Breast epithelium (tissue), 4 donors: ENCODE measurements at regions of chr4 and their contacts with region 1.

Region 1: GRCh38 chr4:151808120-151808529 is 47.3 kb upstream of the GATB start:
- DNase-seq: no peak
- H3K4me3 ChIP-seq: no peak overlapping the region
- H3K27ac ChIP-seq: no peak overlapping the region
- H3K4me1 ChIP-seq: no peaks in the 10 kb centered on the region
- H3K27me3 ChIP-seq: no peaks in the 10 kb centered on the region
- CTCF ChIP-seq: no peak
- POLR2A ChIP-seq: no peak

Region 2: GRCh38 chr4:150619042-150619441 is 1189.1 kb before region 1 on chr4:
- intact Hi-C with region 1: no loop called
- DNase-seq: no peak
- H3K4me3 ChIP-seq: no peak overlapping the region
- H3K27ac ChIP-seq: no peak overlapping the region
- H3K4me1 ChIP-seq: no peaks in the 10 kb centered on the region
- H3K27me3 ChIP-seq: no peaks in the 10 kb centered on the region
- CTCF ChIP-seq: no peak
- POLR2A ChIP-seq: no peak

Region 3: DNA sequence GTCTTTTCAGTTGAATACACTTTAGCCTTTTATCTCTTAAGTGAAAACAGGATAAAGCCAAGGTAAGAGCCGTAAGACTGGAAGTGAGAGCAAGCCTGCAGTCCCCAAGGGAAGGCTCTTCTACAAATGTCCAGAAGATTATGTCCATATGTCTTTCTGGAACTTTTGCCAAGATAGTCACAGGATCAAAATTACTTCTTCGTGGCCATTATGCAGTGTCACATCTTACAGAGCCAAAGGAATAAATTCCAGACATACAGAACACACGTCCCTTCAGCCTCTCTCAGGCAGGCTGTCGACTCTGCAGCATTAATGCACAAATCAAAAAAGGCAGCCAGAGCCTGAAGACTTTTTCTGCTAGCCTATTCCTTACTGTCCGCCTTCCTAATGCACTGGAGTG is 36.5 kb before region 1 on chr4:
- intact Hi-C with region 1: no loop called
- DNase-seq: no peak
- H3K4me3 ChIP-seq: no peak overlapping the region
- H3K27ac ChIP-seq: no peak overlapping the region
- H3K4me1 ChIP-seq: no peaks in the 10 kb centered on the region
- H3K27me3 ChIP-seq: no peaks in the 10 kb centered on the region
- CTCF ChIP-seq: no peak
- POLR2A ChIP-seq: no peak

Region 4: GRCh38 chr4:151955721-151956340 is 147.7 kb after region 1 on chr4:
- intact Hi-C with region 1: loop called (anchors 2 kb)
- DNase-seq: no peak
- H3K4me3 ChIP-seq: no peak overlapping the region
- H3K27ac ChIP-seq: no peak overlapping the region
- H3K4me1 ChIP-seq: no peaks in the 10 kb centered on the region
- H3K27me3 ChIP-seq: no peaks in the 10 kb centered on the region
- CTCF ChIP-seq: no peak
- POLR2A ChIP-seq: no peak

Region 5: GRCh38 chr4:152126238-152126637 is 318.1 kb after region 1 on chr4:
- intact Hi-C with region 1: no loop called
- DNase-seq: no peak
- H3K4me3 ChIP-seq: no peak overlapping the region
- H3K27ac ChIP-seq: no peak overlapping the region
- H3K4me1 ChIP-seq: no peaks in the 10 kb centered on the region
- H3K27me3 ChIP-seq: no peaks in the 10 kb centered on the region
- CTCF ChIP-seq: no peak
- POLR2A ChIP-seq: no peak